ENCODE measurements at regions of chr2 and their contacts with region 1.

Region 1: GRCh38 chr2:186903216-186903615 is 54.2 kb upstream of the ZSWIM2 start:
- DNase-seq: no peak
- ATAC-seq: no peak

Region 2: DNA sequence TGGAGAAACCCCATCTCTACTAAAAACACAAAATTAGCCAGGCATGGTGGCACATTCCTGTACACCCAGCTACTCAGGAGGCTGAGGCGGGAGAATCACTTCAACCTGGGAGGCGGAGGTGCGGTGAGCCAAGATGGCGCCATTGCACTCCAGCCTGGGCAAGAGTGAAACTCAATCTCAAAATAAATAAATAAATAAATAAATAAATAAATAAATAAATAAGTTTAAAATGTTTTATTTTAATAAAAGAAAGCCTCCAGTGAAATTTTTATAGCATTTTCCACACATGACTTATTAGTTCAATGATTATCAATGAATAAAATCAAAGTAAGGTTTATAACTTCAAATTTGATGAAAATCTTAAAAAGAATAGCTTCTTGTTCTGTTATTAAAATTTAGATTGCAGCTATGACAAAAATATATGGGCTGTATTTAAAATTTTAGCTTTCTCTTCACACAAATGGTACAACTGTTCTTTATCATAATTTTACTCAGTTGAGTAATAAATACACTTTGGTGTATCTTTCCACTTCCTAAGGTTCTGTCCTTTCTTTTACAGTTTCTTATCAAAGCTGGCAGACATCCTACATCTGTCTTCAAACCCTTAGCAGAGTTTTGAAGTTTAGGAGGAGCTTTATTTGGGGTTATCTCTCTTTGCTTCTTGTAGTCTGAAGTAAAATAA is 24.1 kb after region 1 on chr2:
- intact Hi-C with region 1: loop called (anchors 1 kb)
- DNase-seq: no peak
- ATAC-seq: no peak

Region 3: GRCh38 chr2:186940463-186940862 is 37.2 kb after region 1 on chr2:
- intact Hi-C with region 1: no loop called
- DNase-seq: no peak
- ATAC-seq: no peak

Region 4: DNA sequence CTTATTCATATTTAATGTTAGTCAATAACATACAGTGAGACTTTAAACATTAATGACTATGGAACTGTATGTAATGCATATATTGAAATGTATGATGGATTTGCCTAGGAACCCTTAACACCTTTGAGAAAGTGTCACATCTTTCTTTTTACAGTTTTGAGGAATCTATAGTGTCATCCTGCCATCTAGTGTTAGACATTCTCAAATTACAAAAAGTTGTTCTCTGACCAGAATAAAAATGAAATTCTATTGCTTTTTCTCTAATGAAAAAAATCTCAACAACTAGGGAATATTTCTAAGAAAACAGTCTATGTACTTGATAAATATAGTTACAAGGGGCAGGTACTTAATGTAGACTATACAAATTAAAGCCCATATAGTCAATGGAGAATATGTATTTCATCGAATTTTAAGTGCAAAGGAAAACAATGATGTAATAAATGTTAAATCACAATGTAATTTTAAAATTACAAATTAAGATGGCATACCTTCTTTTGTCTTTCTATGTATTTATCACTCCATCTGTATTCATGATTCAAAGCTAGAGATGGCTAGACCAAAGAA is 549.9 kb after region 1 on chr2:
- intact Hi-C with region 1: loop called (anchors 10 kb)
- DNase-seq: no peak
- ATAC-seq: no peak

Measured in Right ventricle myocardium inferior (tissue), 1 donor.